Endothelial cell of umbilical vein (primary cell): ENCODE measurements at regions of chr4 and their contacts with region 1.

Region 1: GRCh38 chr4:112636688-112637551 is at the starts of genes LARP7 and ZGRF1:
- DNase-seq: peak; percentile 99
- H3K4me3 ChIP-seq: peak within 1 kb of the TSS; percentile 85 to 97 (median 96)
- H3K27ac ChIP-seq: peak within 1 kb of the TSS; percentile 91
- H3K4me1 ChIP-seq: peaks cover 16% of the 10 kb centered on the region
- H3K27me3 ChIP-seq: no peaks in the 10 kb centered on the region
- CTCF ChIP-seq: peak; percentile 84 to 88
- POLR2A ChIP-seq: no peak
- total RNA-seq, gene LARP7: 30.8 and 35.1 TPM in 2 replicates
- total RNA-seq, gene ZGRF1: 14.0 and 14.4 TPM in 2 replicates

Region 2: DNA sequence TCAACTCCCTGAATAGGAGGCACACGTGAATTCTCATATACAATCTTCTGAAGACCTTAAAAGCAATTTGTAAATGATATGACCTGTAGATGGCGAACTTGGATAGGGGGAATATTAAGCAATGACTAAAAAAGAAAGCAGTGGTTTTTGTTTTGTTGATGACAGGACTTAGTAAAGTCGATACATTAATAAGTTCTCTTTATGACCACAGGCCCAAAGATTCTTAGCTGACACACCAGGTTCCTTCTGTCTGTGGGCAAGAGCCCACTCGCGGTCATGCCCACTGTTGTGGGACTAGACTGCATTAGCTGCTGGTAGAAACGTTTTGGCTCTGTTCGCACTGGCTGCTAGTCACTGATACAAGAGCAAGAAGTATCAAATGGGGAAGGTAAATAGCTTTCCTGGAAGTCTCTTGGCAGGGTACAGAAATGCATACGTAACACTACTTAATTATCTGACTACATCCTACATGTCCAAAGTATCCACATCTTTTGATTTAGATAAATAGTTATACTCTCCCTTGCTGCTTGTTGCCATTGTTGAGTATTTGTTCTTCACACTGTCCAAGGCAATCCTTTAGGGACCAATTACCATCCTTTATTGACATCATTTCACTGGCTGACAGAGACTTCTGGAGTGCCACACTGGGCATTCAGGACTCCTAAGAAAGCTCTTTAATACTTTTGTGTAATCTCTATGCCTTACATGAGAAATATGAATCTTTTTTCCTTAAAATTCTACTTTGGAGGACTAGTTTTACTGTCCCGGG is 308.8 kb before region 1 on chr4:
- CTCF ChIA-PET with region 1: no interaction called
- POLR2A ChIA-PET with region 1: no interaction called
- dilution Hi-C with region 1: no loop called
- intact Hi-C with region 1: loop called (anchors 1 kb)
- DNase-seq: peak; percentile 60
- H3K4me3 ChIP-seq: no peak overlapping the region
- H3K27ac ChIP-seq: no peak overlapping the region
- H3K4me1 ChIP-seq: no peaks in the 10 kb centered on the region
- H3K27me3 ChIP-seq: no peaks in the 10 kb centered on the region
- CTCF ChIP-seq: peak in 1 of 2 donors; percentile 34
- POLR2A ChIP-seq: no peak

Region 3: GRCh38 chr4:112361181-112361791 is 275.6 kb before region 1 on chr4:
- CTCF ChIA-PET with region 1: no interaction called
- POLR2A ChIA-PET with region 1: no interaction called
- dilution Hi-C with region 1: no loop called
- intact Hi-C with region 1: no loop called
- DNase-seq: no peak
- H3K4me3 ChIP-seq: no peak overlapping the region
- H3K27ac ChIP-seq: no peak overlapping the region
- H3K4me1 ChIP-seq: no peaks in the 10 kb centered on the region
- H3K27me3 ChIP-seq: no peaks in the 10 kb centered on the region
- CTCF ChIP-seq: no peak
- POLR2A ChIP-seq: no peak

Region 4: DNA sequence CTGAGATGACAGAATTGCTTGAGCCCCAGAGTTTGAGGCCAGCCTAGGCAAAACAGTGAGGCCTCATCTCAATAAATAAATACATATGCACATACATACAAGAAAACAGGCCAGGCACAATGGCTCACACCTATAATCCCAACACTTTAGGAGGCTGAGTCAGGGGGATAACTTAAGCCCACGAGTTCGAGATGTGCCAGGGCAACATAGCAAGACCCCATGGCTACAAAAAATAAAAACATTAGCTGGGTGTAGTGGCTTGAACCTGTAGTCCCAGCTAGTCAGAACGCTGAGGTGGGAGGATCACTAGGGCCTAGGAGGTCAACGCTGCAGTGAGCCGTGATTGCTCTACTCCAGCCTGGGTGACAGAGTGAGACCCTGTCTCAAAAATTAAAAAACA is 69.4 kb before region 1 on chr4:
- CTCF ChIA-PET with region 1: no interaction called
- POLR2A ChIA-PET with region 1: no interaction called
- dilution Hi-C with region 1: no loop called
- intact Hi-C with region 1: no loop called
- DNase-seq: no peak
- H3K4me3 ChIP-seq: no peak overlapping the region
- H3K27ac ChIP-seq: no peak overlapping the region
- H3K4me1 ChIP-seq: no peaks in the 10 kb centered on the region
- H3K27me3 ChIP-seq: no peaks in the 10 kb centered on the region
- CTCF ChIP-seq: no peak
- POLR2A ChIP-seq: no peak

Region 5: DNA sequence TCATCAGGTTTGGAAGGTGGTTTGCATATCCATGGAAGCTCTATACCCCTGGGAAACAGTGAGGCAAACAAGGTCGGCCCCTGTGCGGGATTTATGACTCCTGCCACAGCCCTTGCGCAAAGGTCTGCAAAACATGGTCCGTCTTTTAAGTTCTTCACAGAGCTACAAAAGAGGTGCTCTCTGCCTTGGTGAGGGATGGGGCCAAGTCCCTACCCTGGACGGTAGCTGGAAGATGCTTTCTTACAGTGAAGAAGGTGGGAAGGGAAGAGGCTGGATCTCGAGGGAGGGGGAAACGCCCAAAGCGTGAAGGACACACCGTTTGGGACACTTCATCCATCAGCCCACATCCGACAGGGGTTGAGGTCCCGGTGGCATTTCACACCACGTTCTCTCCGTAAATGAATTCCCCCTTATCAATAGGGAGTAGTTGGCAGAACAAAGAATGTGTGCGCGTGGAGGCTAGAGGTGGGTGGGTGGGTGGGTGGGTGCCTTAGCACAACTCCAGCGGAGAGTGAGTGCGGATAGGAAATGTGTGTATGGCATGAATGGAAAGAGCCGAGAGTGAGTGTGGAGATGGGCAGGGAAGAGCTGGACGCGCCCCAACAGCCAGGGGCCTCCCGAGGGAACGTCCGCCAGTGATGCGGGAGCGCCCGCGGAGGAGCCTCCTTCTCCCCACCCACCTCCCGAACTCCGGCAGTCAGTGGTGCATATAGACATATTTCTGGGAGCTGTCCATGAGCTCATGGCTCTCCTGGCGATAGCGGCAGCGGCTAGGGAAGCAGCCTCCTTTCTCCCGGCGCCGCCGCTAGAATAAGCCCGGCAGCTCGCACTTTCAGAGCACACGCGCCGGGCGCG is 68.3 kb after region 1 on chr4:
- CTCF ChIA-PET with region 1: no interaction called
- POLR2A ChIA-PET with region 1: no interaction called
- dilution Hi-C with region 1: no loop called
- intact Hi-C with region 1: loop called (anchors 1 kb)
- DNase-seq: peak; percentile 46
- H3K4me3 ChIP-seq: no peak overlapping the region
- H3K27ac ChIP-seq: no peak overlapping the region
- H3K4me1 ChIP-seq: no peaks in the 10 kb centered on the region
- H3K27me3 ChIP-seq: peaks cover 23 to 37% of the 10 kb centered on the region in 2 experiments
- CTCF ChIP-seq: no peak
- POLR2A ChIP-seq: no peak

Region 6: DNA sequence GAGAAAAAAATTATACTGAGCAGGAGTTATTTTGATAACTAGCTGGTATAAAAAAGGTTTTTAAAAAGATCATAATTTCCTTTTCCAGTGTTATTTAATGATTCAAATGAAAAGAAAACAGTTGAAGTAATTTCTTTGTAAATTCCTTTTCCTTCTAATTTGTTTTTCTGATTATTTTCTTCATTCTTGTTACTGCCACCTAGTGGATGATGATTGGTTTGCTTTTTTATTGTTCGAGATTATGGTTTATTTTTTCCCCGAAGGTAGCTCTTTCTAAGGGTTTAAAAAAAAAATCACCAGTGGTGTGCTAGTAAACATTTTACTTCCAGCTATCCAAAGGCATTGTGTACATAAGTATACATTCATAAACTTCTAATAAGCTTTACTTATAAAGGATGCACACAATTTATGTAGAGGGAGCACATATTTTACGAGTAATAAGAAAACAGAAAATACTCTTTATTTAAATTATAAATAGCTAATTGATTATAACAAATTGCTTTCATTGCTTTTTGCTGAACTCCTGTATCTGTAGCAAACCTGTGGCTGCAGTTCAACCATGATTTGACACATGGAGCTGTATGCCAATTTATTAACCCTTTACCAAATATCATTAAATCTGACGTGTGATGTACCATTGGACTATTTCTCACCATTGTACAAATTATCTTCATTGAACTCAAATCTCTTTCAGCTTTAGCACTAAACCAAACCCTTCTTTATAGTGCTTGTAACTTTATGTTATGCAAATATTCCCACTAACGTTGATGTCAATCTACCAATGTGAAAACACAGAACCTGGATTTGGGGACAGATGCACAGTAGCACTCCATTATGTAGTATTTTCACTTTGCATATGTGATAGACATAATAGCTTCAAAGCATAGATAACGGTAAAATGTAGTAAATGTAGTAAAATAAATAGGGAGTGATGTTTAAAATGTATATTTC is 314.7 kb after region 1 on chr4:
- CTCF ChIA-PET with region 1: interaction called, 5 read pairs
- POLR2A ChIA-PET with region 1: no interaction called
- dilution Hi-C with region 1: no loop called
- intact Hi-C with region 1: loop called (anchors 5 kb)
- DNase-seq: peak; percentile 39
- H3K4me3 ChIP-seq: no peak overlapping the region
- H3K27ac ChIP-seq: no peak overlapping the region
- H3K4me1 ChIP-seq: no peaks in the 10 kb centered on the region
- H3K27me3 ChIP-seq: peaks cover 0 to 3% of the 10 kb centered on the region in 2 experiments
- CTCF ChIP-seq: peak; percentile 19 to 25
- POLR2A ChIP-seq: no peak